CD8-positive, alpha-beta T cell (primary cell): ENCODE measurements at regions of chr20 and their contacts with region 1.

Region 1: DNA sequence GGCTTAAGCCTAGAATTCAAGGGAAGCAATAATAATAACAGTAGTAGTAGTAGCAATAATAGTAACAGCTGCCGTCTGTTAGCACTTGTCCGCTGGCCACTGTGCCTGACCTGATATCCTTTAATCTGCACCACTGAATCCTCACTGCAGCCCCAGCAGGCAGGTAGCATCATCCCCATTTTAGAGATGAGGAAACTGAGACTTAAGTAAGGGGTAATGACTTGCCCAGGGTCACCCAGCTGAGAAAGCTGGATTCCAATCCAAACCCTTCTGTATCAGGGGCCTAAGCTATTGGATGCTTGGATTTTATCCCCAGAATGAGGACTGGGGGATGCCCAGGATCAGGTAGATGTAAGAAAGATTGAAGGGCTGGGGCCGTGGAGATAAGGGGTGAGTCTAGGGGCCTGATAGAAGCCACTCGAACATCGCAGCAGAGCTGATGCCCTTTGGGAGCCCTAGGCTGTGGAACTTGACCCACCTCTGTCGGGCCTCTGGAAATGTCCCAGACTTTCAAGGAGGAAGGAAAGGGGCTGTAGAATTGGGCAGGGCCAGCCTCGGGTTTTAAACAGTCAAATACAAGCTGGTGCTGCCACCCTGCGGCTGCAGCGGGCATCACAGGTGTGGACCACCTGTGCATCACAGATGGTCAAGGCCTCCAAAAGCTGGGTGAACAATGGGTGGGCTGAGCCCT is 102.1 kb upstream of the MYL9 start:
- DNase-seq: peak; percentile 29 to 78 (median 65)
- ATAC-seq: peak; percentile 49
- H3K4me3 ChIP-seq: no peak overlapping the region
- H3K4me3 Mint-ChIP-seq: no peak overlapping the region
- H3K27ac ChIP-seq: no peak overlapping the region
- H3K27ac Mint-ChIP-seq: no peak overlapping the region
- H3K4me1 ChIP-seq: no peaks in the 10 kb centered on the region
- H3K4me1 Mint-ChIP-seq: peaks cover 2% of the 10 kb centered on the region
- H3K27me3 ChIP-seq: no peaks in the 10 kb centered on the region
- H3K27me3 Mint-ChIP-seq: peaks cover 6% of the 10 kb centered on the region
- CTCF ChIP-seq: peak; percentile 81

Region 2: GRCh38 chr20:36155991-36156390 is 283.2 kb before region 1 on chr20:
- CTCF ChIA-PET with region 1: interaction called, 3 read pairs
- POLR2A ChIA-PET with region 1: no interaction called
- intact Hi-C with region 1: loop called in 1 of 2 experiments (anchors 2 kb)
- DNase-seq: no peak
- ATAC-seq: no peak
- H3K4me3 ChIP-seq: no peak overlapping the region
- H3K4me3 Mint-ChIP-seq: no peak overlapping the region
- H3K27ac ChIP-seq: no peak overlapping the region
- H3K27ac Mint-ChIP-seq: no peak overlapping the region
- H3K4me1 ChIP-seq: no peaks in the 10 kb centered on the region
- H3K4me1 Mint-ChIP-seq: peaks cover 4% of the 10 kb centered on the region
- H3K27me3 ChIP-seq: peaks cover 0 to 11% of the 10 kb centered on the region in 2 experiments
- H3K27me3 Mint-ChIP-seq: peaks cover 21% of the 10 kb centered on the region
- CTCF ChIP-seq: no peak

Region 3: GRCh38 chr20:36214684-36215256 is 224.4 kb before region 1 on chr20:
- CTCF ChIA-PET with region 1: interaction called, 16 read pairs
- POLR2A ChIA-PET with region 1: no interaction called
- intact Hi-C with region 1: loop called in 1 of 2 experiments (anchors 1 kb)
- DNase-seq: peak in 2 of 9 experiments; percentile 27 to 45
- ATAC-seq: no peak
- H3K4me3 ChIP-seq: no peak overlapping the region
- H3K4me3 Mint-ChIP-seq: no peak overlapping the region
- H3K27ac ChIP-seq: no peak overlapping the region
- H3K27ac Mint-ChIP-seq: no peak overlapping the region
- H3K4me1 ChIP-seq: no peaks in the 10 kb centered on the region
- H3K4me1 Mint-ChIP-seq: no peaks in the 10 kb centered on the region
- H3K27me3 ChIP-seq: no peaks in the 10 kb centered on the region
- H3K27me3 Mint-ChIP-seq: peaks cover 2% of the 10 kb centered on the region
- CTCF ChIP-seq: no peak

Region 4: DNA sequence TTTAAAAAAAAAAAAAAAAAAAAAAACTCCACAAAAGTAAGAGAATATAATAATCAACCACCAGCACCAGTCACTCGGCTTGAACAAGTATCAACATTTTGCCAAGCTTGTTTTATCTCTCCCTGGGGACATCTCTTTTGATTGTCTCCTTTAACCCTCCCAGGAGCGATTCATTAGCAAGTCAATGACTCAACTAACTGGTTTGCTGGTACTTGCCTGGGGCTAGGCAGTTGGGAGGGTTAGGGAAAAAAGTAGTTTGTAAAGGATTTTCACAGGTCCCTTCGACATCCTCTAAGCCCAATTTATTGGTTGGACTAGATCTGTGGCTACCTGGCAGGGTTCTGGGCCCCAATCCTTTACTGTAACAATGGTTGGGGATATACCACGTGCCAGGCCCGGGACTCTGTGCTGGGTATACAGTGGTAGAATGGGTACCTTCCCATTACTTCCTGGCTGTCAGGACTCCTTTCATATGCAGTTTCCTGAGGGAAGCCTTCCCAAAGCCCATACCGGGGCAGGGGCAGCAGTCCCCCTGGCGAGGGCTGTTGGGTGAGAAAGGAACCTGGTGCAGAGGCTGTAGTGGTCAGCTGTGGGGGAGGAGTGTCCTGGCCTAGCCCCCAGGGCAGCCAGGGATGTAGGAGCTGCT is 146.4 kb after region 1 on chr20:
- CTCF ChIA-PET with region 1: no interaction called
- POLR2A ChIA-PET with region 1: no interaction called
- intact Hi-C with region 1: no loop called
- DNase-seq: no peak
- ATAC-seq: no peak
- H3K4me3 ChIP-seq: no peak overlapping the region
- H3K4me3 Mint-ChIP-seq: no peak overlapping the region
- H3K27ac ChIP-seq: peak overlapping the region in 1 of 2 experiments; percentile 19
- H3K27ac Mint-ChIP-seq: no peak overlapping the region
- H3K4me1 ChIP-seq: peaks cover 13% of the 10 kb centered on the region
- H3K4me1 Mint-ChIP-seq: peaks cover 30% of the 10 kb centered on the region
- H3K27me3 ChIP-seq: no peaks in the 10 kb centered on the region
- H3K27me3 Mint-ChIP-seq: no peaks in the 10 kb centered on the region
- CTCF ChIP-seq: no peak